ENCODE measurements at regions of chr3 and their contacts with region 1.

Region 1: GRCh38 chr3:147354623-147355022 is 51.7 kb downstream of the ZIC4 start:
- DNase-seq: peak; percentile 25
- H3K4me3 Mint-ChIP-seq: peak overlapping the region; percentile 20
- H3K27ac Mint-ChIP-seq: no peak overlapping the region
- H3K4me1 Mint-ChIP-seq: peaks cover 12% of the 10 kb centered on the region
- H3K27me3 Mint-ChIP-seq: peaks cover 13% of the 10 kb centered on the region
- CTCF ChIP-seq: no peak

Region 2: GRCh38 chr3:147318900-147319299 is 35.7 kb before region 1 on chr3:
- CTCF ChIA-PET with region 1: no interaction called
- intact Hi-C with region 1: no loop called
- DNase-seq: no peak
- H3K4me3 Mint-ChIP-seq: no peak overlapping the region
- H3K27ac Mint-ChIP-seq: no peak overlapping the region
- H3K4me1 Mint-ChIP-seq: no peaks in the 10 kb centered on the region
- H3K27me3 Mint-ChIP-seq: no peaks in the 10 kb centered on the region
- CTCF ChIP-seq: no peak

Region 3: GRCh38 chr3:147333098-147333497 is 21.5 kb before region 1 on chr3:
- CTCF ChIA-PET with region 1: no interaction called
- intact Hi-C with region 1: no loop called
- DNase-seq: no peak
- H3K4me3 Mint-ChIP-seq: no peak overlapping the region
- H3K27ac Mint-ChIP-seq: no peak overlapping the region
- H3K4me1 Mint-ChIP-seq: no peaks in the 10 kb centered on the region
- H3K27me3 Mint-ChIP-seq: no peaks in the 10 kb centered on the region
- CTCF ChIP-seq: no peak

Region 4: DNA sequence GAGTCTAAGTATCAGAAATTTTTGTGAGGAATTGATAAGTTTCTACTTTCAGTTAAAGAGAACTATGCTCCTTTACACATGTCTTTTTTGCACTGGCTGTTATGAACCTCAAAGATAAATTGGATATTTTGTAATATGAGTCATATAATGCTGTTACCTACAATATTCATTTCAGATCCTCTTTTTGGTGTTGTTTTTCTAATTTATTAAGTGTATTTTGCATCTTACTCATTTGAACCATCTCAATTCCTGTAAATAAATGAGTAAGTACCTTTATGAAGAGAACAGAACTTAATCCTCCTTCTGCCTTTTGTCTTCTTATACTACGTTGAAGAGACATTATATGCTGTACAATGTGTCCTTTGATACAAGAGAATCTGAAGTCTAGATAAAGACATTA is 129.0 kb after region 1 on chr3:
- CTCF ChIA-PET with region 1: no interaction called
- intact Hi-C with region 1: no loop called
- DNase-seq: no peak
- H3K4me3 Mint-ChIP-seq: no peak overlapping the region
- H3K27ac Mint-ChIP-seq: no peak overlapping the region
- H3K4me1 Mint-ChIP-seq: no peaks in the 10 kb centered on the region
- H3K27me3 Mint-ChIP-seq: no peaks in the 10 kb centered on the region
- CTCF ChIP-seq: no peak

Region 5: DNA sequence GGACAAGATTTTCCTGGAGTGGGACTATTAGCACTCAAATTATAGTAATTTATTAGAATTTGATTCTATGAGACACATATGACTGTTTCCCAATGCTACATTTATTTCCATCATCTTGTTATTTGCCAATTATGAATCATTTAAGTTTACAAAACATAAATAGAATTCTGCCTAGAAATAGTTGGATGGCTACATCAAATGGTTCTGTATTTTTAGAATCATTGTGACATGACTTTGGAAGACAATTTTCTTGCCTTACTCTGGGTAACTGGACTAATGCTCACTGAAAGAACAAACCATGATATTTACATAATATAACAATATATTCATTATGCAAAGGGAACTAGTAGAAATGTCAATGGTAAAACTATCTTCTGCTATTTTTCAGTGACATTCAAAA is 228.0 kb after region 1 on chr3:
- CTCF ChIA-PET with region 1: no interaction called
- intact Hi-C with region 1: no loop called
- DNase-seq: no peak
- H3K4me3 Mint-ChIP-seq: no peak overlapping the region
- H3K27ac Mint-ChIP-seq: no peak overlapping the region
- H3K4me1 Mint-ChIP-seq: no peaks in the 10 kb centered on the region
- H3K27me3 Mint-ChIP-seq: no peaks in the 10 kb centered on the region
- CTCF ChIP-seq: no peak

Region 6: GRCh38 chr3:149010504-149010951 is 1655.9 kb after region 1 on chr3:
- CTCF ChIA-PET with region 1: interaction called, 13 read pairs
- intact Hi-C with region 1: no loop called
- DNase-seq: peak; percentile 14
- H3K4me3 Mint-ChIP-seq: no peak overlapping the region
- H3K27ac Mint-ChIP-seq: no peak overlapping the region
- H3K4me1 Mint-ChIP-seq: no peaks in the 10 kb centered on the region
- H3K27me3 Mint-ChIP-seq: no peaks in the 10 kb centered on the region
- CTCF ChIP-seq: no peak

Measured in Calu3 (cell line).